ENCODE measurements at regions of chr1 and their contacts with region 1.

Region 1: GRCh38 chr1:36323597-36324352 is at the start of gene EVA1B:
- DNase-seq: peak; percentile 83 to 89 (median 85)
- H3K4me3 ChIP-seq: peak within 1 kb of the TSS; percentile 65
- H3K27ac ChIP-seq: peak within 1 kb of the TSS; percentile 72 to 98
- H3K4me1 ChIP-seq: peaks cover 15% of the 10 kb centered on the region
- H3K27me3 ChIP-seq: no peaks in the 10 kb centered on the region
- CTCF ChIP-seq: no peak
- EP300 ChIP-seq: no peak
- POLR2A ChIP-seq: no peak
- total RNA-seq, gene EVA1B: 39.9 to 113 (median 56.8) TPM

Region 2: DNA sequence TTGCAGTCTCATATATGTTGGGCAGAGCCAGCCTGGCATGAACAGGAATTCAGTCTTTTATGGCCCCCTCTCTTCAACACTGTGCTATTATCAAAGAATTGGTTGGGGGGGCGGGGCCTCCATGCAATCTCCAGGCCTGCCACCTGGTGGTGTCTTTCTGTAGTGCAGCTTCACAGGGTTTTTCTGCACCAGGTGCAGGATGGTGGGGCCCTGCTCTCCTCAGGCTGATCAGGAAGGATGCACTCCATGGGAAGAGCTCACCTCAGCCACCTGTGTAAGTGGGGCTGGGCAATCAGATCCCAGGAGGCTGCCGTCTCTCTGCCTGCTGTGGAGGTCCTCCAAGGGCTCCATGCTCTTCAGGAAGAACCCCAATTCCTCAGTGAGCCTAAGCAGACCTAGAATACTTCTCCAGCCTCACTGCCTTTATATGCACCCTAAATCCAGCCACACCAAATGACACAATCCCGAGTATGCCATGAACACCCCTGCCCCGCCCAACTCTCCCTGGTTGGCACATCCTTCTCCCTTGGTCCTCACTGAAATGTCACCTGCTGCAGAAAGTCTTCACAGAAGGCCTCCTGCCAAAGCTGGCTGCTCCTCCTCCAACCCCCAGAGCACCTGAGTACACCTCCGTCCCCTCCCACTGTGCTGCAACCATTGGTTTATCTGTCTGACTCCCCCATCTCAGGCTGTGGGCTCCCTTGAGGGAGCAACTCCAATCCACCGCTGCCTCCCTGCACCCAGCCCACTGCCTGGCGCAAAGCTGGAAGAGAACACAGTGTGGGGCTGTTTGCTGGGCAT is 45.5 kb after region 1 on chr1:
- intact Hi-C with region 1: loop called in 2 of 4 experiments (anchors 5 kb)
- DNase-seq: peak; percentile 64 to 84 (median 80)
- H3K4me3 ChIP-seq: no peak overlapping the region
- H3K27ac ChIP-seq: no peak overlapping the region
- H3K4me1 ChIP-seq: peaks cover 23% of the 10 kb centered on the region
- H3K27me3 ChIP-seq: no peaks in the 10 kb centered on the region
- CTCF ChIP-seq: peak; percentile 85 to 90 (median 88)
- EP300 ChIP-seq: no peak
- POLR2A ChIP-seq: no peak

Region 3: GRCh38 chr1:36385410-36386257 is 61.9 kb after region 1 on chr1 and contains the start of gene STK40:
- intact Hi-C with region 1: loop called in 2 of 4 experiments (anchors 5 kb)
- DNase-seq: peak; percentile 98 to 99 (median 99)
- H3K4me3 ChIP-seq: peak within 1 kb of the TSS; percentile 98
- H3K27ac ChIP-seq: peak within 1 kb of the TSS; percentile 69 to 90
- H3K4me1 ChIP-seq: peaks cover 24% of the 10 kb centered on the region
- H3K27me3 ChIP-seq: no peaks in the 10 kb centered on the region
- CTCF ChIP-seq: no peak
- EP300 ChIP-seq: no peak
- POLR2A ChIP-seq: peak; percentile 93
- total RNA-seq, gene STK40: 22.9 to 104 (median 83.2) TPM

Region 4: GRCh38 chr1:36605942-36606640 is 282.3 kb after region 1 on chr1:
- intact Hi-C with region 1: no loop called
- DNase-seq: no peak
- H3K4me3 ChIP-seq: no peak overlapping the region
- H3K27ac ChIP-seq: no peak overlapping the region
- H3K4me1 ChIP-seq: no peaks in the 10 kb centered on the region
- H3K27me3 ChIP-seq: no peaks in the 10 kb centered on the region
- CTCF ChIP-seq: no peak
- EP300 ChIP-seq: no peak
- POLR2A ChIP-seq: no peak